MCF 10A (cell line): ENCODE measurements at regions of chr1 and their contacts with region 1.

Region 1: GRCh38 chr1:222792744-222793143 is 22.1 kb upstream of the DISP1 start:
- DNase-seq: peak; percentile 56
- H3K4me3 Mint-ChIP-seq: no peak overlapping the region
- H3K27ac Mint-ChIP-seq: no peak overlapping the region
- H3K4me1 Mint-ChIP-seq: peaks cover 18% of the 10 kb centered on the region
- H3K27me3 Mint-ChIP-seq: peaks cover 8% of the 10 kb centered on the region
- CTCF ChIP-seq: peak; percentile 81

Region 2: DNA sequence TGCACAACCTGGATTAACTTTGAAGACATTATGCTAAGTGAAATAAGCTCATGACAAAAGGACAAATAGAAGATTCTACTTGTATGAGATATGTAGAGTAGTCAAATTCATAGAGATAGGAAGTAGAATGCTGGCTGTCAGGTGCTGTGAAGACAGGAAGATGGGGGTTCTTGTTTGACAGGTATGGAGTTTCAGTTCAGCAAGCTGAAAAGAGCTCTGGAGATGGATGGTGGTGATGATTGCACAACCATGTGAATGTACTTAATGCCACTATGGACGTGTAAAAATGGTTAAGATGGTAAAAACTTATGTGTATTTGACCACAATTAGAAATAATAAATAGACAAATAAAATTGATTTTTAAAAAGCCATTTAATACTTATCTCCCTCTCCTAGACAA is 881.0 kb before region 1 on chr1:
- CTCF ChIA-PET with region 1: no interaction called
- POLR2A ChIA-PET with region 1: no interaction called
- intact Hi-C with region 1: no loop called
- DNase-seq: no peak
- H3K4me3 Mint-ChIP-seq: no peak overlapping the region
- H3K27ac Mint-ChIP-seq: no peak overlapping the region
- H3K4me1 Mint-ChIP-seq: no peaks in the 10 kb centered on the region
- H3K27me3 Mint-ChIP-seq: no peaks in the 10 kb centered on the region
- CTCF ChIP-seq: no peak

Region 3: DNA sequence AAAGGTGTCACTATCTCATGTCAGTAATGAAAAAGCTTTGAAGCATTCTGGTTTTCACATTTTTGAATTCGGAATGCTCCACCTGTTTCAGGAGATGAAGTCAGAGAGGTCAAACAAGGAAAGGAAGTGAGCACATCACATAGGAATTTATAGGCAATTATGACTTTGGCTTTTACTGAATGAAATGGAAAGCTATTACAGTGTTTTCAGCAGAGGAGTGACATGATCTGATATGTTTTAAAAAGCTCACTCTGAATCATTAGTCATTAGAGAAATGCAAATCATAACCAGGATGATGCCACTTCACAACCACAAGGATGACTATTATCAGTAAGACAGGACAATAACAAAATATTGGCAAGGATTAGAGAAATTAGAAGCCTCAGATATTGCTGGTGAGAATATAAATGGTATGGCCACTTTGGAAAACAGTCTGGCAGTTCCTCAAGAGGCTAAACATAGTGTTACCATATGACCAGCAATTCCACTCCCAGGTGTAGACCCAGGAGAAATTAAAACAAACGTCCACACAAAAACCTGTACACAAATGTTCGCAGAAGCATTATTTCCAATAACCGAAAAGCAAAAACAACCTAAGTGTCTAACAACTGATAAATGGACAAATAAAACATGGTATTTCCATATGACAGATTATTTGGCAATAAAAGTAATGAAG is 210.5 kb before region 1 on chr1:
- CTCF ChIA-PET with region 1: no interaction called
- POLR2A ChIA-PET with region 1: no interaction called
- intact Hi-C with region 1: no loop called
- DNase-seq: peak; percentile 47
- H3K4me3 Mint-ChIP-seq: no peak overlapping the region
- H3K27ac Mint-ChIP-seq: peak overlapping the region; percentile 82
- H3K4me1 Mint-ChIP-seq: peaks cover 41% of the 10 kb centered on the region
- H3K27me3 Mint-ChIP-seq: no peaks in the 10 kb centered on the region
- CTCF ChIP-seq: no peak

Region 4: GRCh38 chr1:222739465-222739864 is 53.3 kb before region 1 on chr1:
- CTCF ChIA-PET with region 1: interaction called, 20 read pairs
- POLR2A ChIA-PET with region 1: no interaction called
- intact Hi-C with region 1: loop called (anchors 1 kb)
- DNase-seq: no peak
- H3K4me3 Mint-ChIP-seq: no peak overlapping the region
- H3K27ac Mint-ChIP-seq: no peak overlapping the region
- H3K4me1 Mint-ChIP-seq: no peaks in the 10 kb centered on the region
- H3K27me3 Mint-ChIP-seq: no peaks in the 10 kb centered on the region
- CTCF ChIP-seq: no peak

Region 5: GRCh38 chr1:222754366-222755139 is 38.2 kb before region 1 on chr1:
- CTCF ChIA-PET with region 1: interaction called, 11 read pairs
- POLR2A ChIA-PET with region 1: interaction called, 6 read pairs
- intact Hi-C with region 1: no loop called
- DNase-seq: peak; percentile 98
- H3K4me3 Mint-ChIP-seq: peak overlapping the region; percentile 46
- H3K27ac Mint-ChIP-seq: peak overlapping the region; percentile 86
- H3K4me1 Mint-ChIP-seq: peaks cover 28% of the 10 kb centered on the region
- H3K27me3 Mint-ChIP-seq: no peaks in the 10 kb centered on the region
- CTCF ChIP-seq: no peak

Region 6: DNA sequence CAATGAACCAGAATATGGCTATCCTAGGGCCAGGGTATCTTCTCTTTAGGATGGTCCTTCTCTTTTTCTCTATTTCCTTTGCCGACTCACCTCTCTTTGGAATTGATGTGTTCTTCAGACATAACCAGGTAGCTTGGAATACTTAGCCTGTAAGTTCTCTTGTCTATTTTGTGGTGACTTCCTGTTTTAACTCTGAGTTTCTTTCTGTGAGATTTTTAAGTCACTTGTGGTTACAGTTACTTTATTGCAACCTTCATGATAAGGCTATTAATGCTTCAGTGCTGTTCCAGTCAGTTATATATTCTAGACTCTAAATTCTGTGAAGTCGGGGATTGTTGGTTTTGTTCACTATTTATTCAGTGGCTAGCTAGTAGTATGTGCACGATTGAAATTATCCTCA is 68.3 kb after region 1 on chr1:
- CTCF ChIA-PET with region 1: no interaction called
- POLR2A ChIA-PET with region 1: no interaction called
- intact Hi-C with region 1: no loop called
- DNase-seq: no peak
- H3K4me3 Mint-ChIP-seq: no peak overlapping the region
- H3K27ac Mint-ChIP-seq: no peak overlapping the region
- H3K4me1 Mint-ChIP-seq: no peaks in the 10 kb centered on the region
- H3K27me3 Mint-ChIP-seq: no peaks in the 10 kb centered on the region
- CTCF ChIP-seq: no peak

Region 7: DNA sequence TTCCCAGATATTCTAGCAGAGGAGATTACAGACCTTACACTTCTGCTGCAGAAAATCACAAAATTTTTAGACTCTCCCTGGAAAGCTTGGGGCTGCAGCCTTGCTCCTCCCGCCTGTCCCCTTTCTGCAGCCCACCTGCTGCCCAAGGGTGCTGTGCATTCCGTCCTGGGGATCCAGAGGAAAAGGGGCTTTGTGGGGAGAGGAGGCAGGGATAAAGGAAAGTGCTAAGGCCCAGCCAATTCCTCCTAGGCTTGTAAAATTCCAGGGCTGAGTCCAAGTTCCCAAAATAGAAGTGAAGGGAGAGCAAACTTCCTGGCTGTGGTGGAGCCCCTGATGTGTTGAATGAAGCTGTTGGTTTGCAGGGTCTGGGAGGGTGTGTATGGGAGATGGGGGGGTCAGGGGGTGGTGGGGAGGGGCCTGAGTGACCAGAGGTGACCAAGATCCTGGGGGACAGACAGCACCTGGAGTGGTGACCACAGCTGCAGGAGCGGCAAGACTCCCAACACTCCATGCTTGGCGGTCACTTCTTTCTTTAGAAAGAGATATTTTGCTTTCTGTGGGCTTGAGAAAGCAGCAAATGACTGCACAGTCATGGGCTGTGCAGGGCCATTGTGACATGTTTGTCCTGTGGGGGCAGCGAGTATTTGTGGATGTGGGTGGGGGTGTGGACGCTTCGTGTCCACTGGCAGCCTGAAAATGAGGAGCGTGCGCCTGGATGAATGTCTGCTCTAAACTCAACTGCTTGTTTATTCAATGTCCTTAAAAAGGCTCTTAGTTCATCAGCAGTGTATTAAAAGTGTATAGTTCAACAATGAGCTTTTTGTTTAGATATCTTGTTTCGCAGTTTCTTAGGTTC is 281.9 kb after region 1 on chr1:
- CTCF ChIA-PET with region 1: interaction called, 12 read pairs
- POLR2A ChIA-PET with region 1: interaction called, 5 read pairs
- intact Hi-C with region 1: no loop called
- DNase-seq: no peak
- H3K4me3 Mint-ChIP-seq: no peak overlapping the region
- H3K27ac Mint-ChIP-seq: no peak overlapping the region
- H3K4me1 Mint-ChIP-seq: no peaks in the 10 kb centered on the region
- H3K27me3 Mint-ChIP-seq: peaks cover 60% of the 10 kb centered on the region
- CTCF ChIP-seq: no peak

Region 8: GRCh38 chr1:223531742-223532341 is 739.1 kb after region 1 on chr1:
- CTCF ChIA-PET with region 1: no interaction called
- POLR2A ChIA-PET with region 1: no interaction called
- intact Hi-C with region 1: loop called (anchors 5 kb)
- DNase-seq: peak; percentile 87
- H3K4me3 Mint-ChIP-seq: no peak overlapping the region
- H3K27ac Mint-ChIP-seq: no peak overlapping the region
- H3K4me1 Mint-ChIP-seq: no peaks in the 10 kb centered on the region
- H3K27me3 Mint-ChIP-seq: peaks cover 24% of the 10 kb centered on the region
- CTCF ChIP-seq: peak; percentile 90

Region 9: DNA sequence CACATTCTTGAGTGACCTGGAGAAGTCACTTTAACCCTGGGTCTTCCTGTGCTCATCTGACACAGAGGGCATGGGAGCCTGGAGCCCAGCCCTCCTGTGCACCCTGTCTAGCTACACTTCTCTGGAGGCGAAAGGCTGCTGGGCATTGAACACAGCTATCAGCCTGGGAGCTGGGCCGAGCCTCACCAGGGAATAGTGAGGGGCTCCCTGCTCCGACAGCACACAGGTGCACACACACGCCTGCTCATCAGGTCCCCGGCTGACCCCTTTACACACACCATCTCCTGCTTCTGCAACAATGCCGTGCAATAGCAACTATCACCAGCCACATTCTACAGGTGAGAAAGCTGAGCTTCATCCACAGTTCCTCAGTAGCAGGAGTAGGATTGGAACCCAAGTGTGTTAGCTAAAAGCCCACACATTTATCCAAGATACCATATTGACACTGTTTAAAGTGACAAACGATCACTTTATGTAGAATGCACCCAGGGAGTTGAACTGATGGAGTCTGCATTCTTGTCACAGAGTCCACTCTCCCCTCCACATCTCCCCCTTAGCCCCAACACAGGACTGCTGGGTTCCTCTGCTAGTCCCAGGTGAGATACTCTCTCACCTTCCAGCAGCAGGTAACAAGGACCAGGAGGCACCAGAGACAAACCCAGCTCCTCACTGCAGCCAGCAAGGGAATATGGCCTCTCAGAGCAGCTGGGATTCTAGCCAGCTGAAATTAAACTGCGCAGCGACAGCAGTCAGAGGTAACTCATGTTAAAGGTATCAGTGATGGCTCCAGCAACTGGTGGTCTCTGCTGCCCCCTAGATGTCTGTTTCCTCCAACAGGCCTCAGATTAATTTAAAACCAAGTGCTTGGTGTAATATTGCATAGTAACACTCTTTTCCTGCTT is 891.1 kb after region 1 on chr1:
- CTCF ChIA-PET with region 1: interaction called, 15 read pairs
- POLR2A ChIA-PET with region 1: no interaction called
- intact Hi-C with region 1: loop called (anchors 1 kb)
- DNase-seq: peak; percentile 85
- H3K4me3 Mint-ChIP-seq: no peak overlapping the region
- H3K27ac Mint-ChIP-seq: no peak overlapping the region
- H3K4me1 Mint-ChIP-seq: peaks cover 6% of the 10 kb centered on the region
- H3K27me3 Mint-ChIP-seq: no peaks in the 10 kb centered on the region
- CTCF ChIP-seq: peak; percentile 94